PC-3 (cell line): ENCODE measurements at regions of chr3 and their contacts with region 1.

Region 1: GRCh38 chr3:193046371-193046770 is 128.7 kb upstream of the MB21D2 start:
- DNase-seq: no peak
- ATAC-seq: no peak
- H3K4me3 ChIP-seq: no peak overlapping the region
- H3K27ac ChIP-seq: no peak overlapping the region
- H3K4me1 ChIP-seq: no peaks in the 10 kb centered on the region
- H3K27me3 ChIP-seq: peaks cover 19% of the 10 kb centered on the region
- CTCF ChIP-seq: no peak

Region 2: GRCh38 chr3:193031911-193032310 is 14.5 kb before region 1 on chr3:
- CTCF ChIA-PET with region 1: no interaction called
- POLR2A ChIA-PET with region 1: no interaction called
- intact Hi-C with region 1: no loop called
- DNase-seq: no peak
- ATAC-seq: no peak
- H3K4me3 ChIP-seq: no peak overlapping the region
- H3K27ac ChIP-seq: no peak overlapping the region
- H3K4me1 ChIP-seq: peaks cover 11% of the 10 kb centered on the region; the same call in 1 of the 2 replicates
- H3K27me3 ChIP-seq: no peaks in the 10 kb centered on the region
- CTCF ChIP-seq: no peak

Region 3: GRCh38 chr3:193572426-193572908 is 526.1 kb after region 1 on chr3:
- CTCF ChIA-PET with region 1: no interaction called
- POLR2A ChIA-PET with region 1: no interaction called
- intact Hi-C with region 1: loop called (anchors 5 kb)
- DNase-seq: peak; percentile 80
- ATAC-seq: peak; percentile 93
- H3K4me3 ChIP-seq: no peak overlapping the region
- H3K27ac ChIP-seq: no peak overlapping the region
- H3K4me1 ChIP-seq: peaks cover 6% of the 10 kb centered on the region
- H3K27me3 ChIP-seq: peaks cover 41% of the 10 kb centered on the region
- CTCF ChIP-seq: peak; percentile 96